Activated naive CD4-positive, alpha-beta T cell treated with anti-CD3 and anti-CD28 coated beads for 36 hours (primary cell): ENCODE measurements at regions of chr2 and their contacts with region 1.

Region 1: DNA sequence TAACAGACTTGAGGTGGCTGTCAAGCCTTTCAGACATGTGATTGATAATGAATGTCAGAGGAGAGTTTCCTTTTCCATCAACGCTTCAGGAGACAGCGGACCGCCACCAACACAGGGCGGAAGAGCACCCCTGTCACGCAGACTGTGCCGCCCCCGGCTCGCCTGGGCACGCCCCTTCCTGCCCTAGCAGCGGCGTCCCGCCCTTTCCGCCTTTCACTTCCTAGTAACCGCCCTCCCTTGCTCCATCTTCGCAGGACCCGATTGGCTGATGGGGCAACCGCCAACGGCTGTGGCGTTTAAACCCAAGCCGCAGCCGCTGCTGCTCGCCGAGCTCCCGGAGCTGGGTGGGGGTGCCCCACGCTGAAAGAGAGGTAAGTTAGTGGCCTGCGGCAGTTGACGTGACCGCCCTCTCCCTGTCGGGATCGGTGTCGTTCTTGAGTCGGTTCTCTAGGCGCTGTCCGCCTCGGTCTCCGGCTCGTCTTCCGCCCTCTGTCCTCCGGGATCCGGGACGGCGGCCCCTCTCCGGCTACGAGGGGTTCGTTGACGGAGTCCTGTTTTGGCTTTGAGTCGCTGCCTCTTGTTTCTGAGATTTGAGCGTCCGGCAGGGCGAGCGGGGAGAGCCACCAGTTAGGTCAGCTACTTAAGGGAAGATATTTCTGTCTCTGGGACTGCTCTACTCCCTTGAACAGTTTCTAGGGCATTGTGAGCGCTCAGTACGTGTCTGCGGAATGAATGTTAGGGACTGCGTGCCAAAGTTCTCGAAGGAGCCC is at the start of gene SGO2:
- DNase-seq: peak; percentile 98
- H3K4me3 Mint-ChIP-seq: peak within 1 kb of the TSS; percentile 90
- H3K27ac Mint-ChIP-seq: peak within 1 kb of the TSS; percentile 84
- H3K4me1 Mint-ChIP-seq: peaks cover 17% of the 10 kb centered on the region
- H3K27me3 Mint-ChIP-seq: no peaks in the 10 kb centered on the region
- total RNA-seq, gene SGO2: 39.7 to 40.0 TPM

Region 2: GRCh38 chr2:200509612-200510433 is 16.2 kb before region 1 on chr2 and contains the start of gene KCTD18:
- CTCF ChIA-PET with region 1: interaction called, 8 read pairs
- intact Hi-C with region 1: loop called (anchors 1 kb)
- DNase-seq: peak; percentile 92
- H3K4me3 Mint-ChIP-seq: peak within 1 kb of the TSS; percentile 94
- H3K27ac Mint-ChIP-seq: peak within 1 kb of the TSS; percentile 79
- H3K4me1 Mint-ChIP-seq: peaks cover 16% of the 10 kb centered on the region
- H3K27me3 Mint-ChIP-seq: no peaks in the 10 kb centered on the region
- total RNA-seq, gene KCTD18: 8.7 to 10.0 TPM

Region 3: GRCh38 chr2:200515155-200515554 is 10.9 kb before region 1 on chr2:
- CTCF ChIA-PET with region 1: interaction called, 8 read pairs
- intact Hi-C with region 1: loop called (anchors 1 kb)
- DNase-seq: no peak
- H3K4me3 Mint-ChIP-seq: no peak overlapping the region
- H3K27ac Mint-ChIP-seq: peak overlapping the region; percentile 7
- H3K4me1 Mint-ChIP-seq: peaks cover 3% of the 10 kb centered on the region
- H3K27me3 Mint-ChIP-seq: no peaks in the 10 kb centered on the region

Region 4: GRCh38 chr2:201357241-201357640 is 831.2 kb after region 1 on chr2 and contains the start of gene FLACC1:
- CTCF ChIA-PET with region 1: no interaction called
- intact Hi-C with region 1: no loop called
- DNase-seq: no peak
- H3K4me3 Mint-ChIP-seq: no peak within 1 kb of the TSS
- H3K27ac Mint-ChIP-seq: no peak within 1 kb of the TSS
- H3K4me1 Mint-ChIP-seq: peaks cover 10% of the 10 kb centered on the region
- H3K27me3 Mint-ChIP-seq: no peaks in the 10 kb centered on the region
- total RNA-seq, gene FLACC1: 0.57 to 0.84 TPM